ENCODE measurements at regions of chr3 and their contacts with region 1.

Region 1: GRCh38 chr3:127574880-127575878 is 15.4 kb downstream of the TPRA1 start:
- DNase-seq: peak; percentile 75 to 93 (median 85)
- ATAC-seq: peak; percentile 98
- H3K4me3 ChIP-seq: no peak overlapping the region
- H3K4me3 Mint-ChIP-seq: peak overlapping the region; percentile 30
- H3K27ac ChIP-seq: no peak overlapping the region
- H3K27ac Mint-ChIP-seq: peak overlapping the region; percentile 46
- H3K4me1 ChIP-seq: peaks cover 13% of the 10 kb centered on the region
- H3K4me1 Mint-ChIP-seq: peaks cover 19% of the 10 kb centered on the region
- H3K27me3 ChIP-seq: no peaks in the 10 kb centered on the region
- H3K27me3 Mint-ChIP-seq: no peaks in the 10 kb centered on the region
- CTCF ChIP-seq: peak; percentile 90

Region 2: DNA sequence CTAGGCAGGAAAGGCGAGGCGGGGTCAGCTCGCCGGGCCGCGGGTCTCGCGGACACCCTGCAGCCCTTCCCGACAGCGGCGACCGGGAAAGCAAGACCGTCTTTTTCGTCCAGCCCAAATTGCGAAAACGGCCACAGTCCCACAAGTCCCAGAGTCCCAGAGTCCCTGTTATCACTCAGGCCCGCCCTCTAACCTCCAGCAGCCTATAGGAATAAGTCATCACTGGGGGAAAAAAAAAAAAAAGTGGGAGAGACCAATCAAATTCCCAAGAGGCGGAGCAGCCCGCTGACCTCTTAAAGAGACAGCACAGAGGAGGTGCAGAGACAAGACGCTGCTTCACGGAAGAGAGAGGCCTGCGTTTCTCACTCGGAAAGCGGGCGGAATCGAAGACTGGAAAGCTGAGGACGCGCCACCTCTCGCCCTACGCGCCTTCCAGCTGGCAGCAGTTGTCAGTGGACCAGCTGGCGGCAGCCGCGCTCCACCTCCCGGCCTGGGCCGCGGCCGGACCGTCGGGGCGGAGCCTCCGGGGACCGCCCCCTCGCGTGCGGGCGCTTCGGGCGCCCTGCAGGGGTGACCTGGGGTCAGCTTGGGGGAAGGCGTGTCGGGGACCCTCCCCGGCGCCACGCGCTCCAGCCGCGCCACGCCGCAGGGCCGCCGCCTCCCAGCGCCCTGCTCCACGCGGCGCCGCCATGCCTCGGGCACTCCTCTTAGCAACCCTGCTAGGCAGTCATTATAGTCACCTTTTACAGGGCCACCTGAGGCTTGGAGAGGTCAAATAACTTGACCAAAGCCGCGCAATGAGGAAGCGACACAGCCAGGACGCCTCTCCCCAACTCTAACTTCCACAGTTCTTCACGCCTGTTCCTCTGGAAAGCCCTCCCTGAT is 15.7 kb after region 1 on chr3 and contains the start of gene TPRA1:
- CTCF ChIA-PET with region 1: interaction called, 21 read pairs
- POLR2A ChIA-PET with region 1: interaction called, 10 read pairs
- intact Hi-C with region 1: loop called in 1 of 2 experiments (anchors 1 kb)
- DNase-seq: peak; percentile 51 to 93 (median 74)
- ATAC-seq: peak; percentile 89
- H3K4me3 ChIP-seq: peak within 1 kb of the TSS; percentile 71
- H3K4me3 Mint-ChIP-seq: peak within 1 kb of the TSS; percentile 99
- H3K27ac ChIP-seq: peak within 1 kb of the TSS; percentile 54 to 82
- H3K27ac Mint-ChIP-seq: peak within 1 kb of the TSS; percentile 93
- H3K4me1 ChIP-seq: peaks cover 36% of the 10 kb centered on the region
- H3K4me1 Mint-ChIP-seq: peaks cover 43% of the 10 kb centered on the region
- H3K27me3 ChIP-seq: no peaks in the 10 kb centered on the region
- H3K27me3 Mint-ChIP-seq: no peaks in the 10 kb centered on the region
- CTCF ChIP-seq: no peak
- total RNA-seq, gene TPRA1: 7.5 to 7.8 TPM

Region 3: GRCh38 chr3:127628788-127629466 is 53.7 kb after region 1 on chr3 and contains the start of gene PODXL2:
- CTCF ChIA-PET with region 1: interaction called, 6 read pairs
- POLR2A ChIA-PET with region 1: no interaction called
- intact Hi-C with region 1: loop called in 1 of 2 experiments (anchors 5 kb)
- DNase-seq: peak in 9 of 14 experiments; percentile 12 to 77 (median 41)
- ATAC-seq: peak; percentile 40
- H3K4me3 ChIP-seq: peak within 1 kb of the TSS; percentile 65
- H3K4me3 Mint-ChIP-seq: peak within 1 kb of the TSS; percentile 90
- H3K27ac ChIP-seq: no peak within 1 kb of the TSS
- H3K27ac Mint-ChIP-seq: peak within 1 kb of the TSS; percentile 67
- H3K4me1 ChIP-seq: peaks cover 29% of the 10 kb centered on the region
- H3K4me1 Mint-ChIP-seq: peaks cover 44% of the 10 kb centered on the region
- H3K27me3 ChIP-seq: peaks cover 8 to 11% of the 10 kb centered on the region in 2 experiments
- H3K27me3 Mint-ChIP-seq: peaks cover 36% of the 10 kb centered on the region
- CTCF ChIP-seq: no peak
- total RNA-seq, gene PODXL2: 4.0 to 4.2 TPM

Region 4: GRCh38 chr3:127848131-127849129 is 273.3 kb after region 1 on chr3:
- CTCF ChIA-PET with region 1: no interaction called
- POLR2A ChIA-PET with region 1: no interaction called
- intact Hi-C with region 1: no loop called
- DNase-seq: no peak
- ATAC-seq: no peak
- H3K4me3 ChIP-seq: no peak overlapping the region
- H3K4me3 Mint-ChIP-seq: no peak overlapping the region
- H3K27ac ChIP-seq: no peak overlapping the region
- H3K27ac Mint-ChIP-seq: no peak overlapping the region
- H3K4me1 ChIP-seq: no peaks in the 10 kb centered on the region
- H3K4me1 Mint-ChIP-seq: no peaks in the 10 kb centered on the region
- H3K27me3 ChIP-seq: peaks cover 0 to 8% of the 10 kb centered on the region in 2 experiments
- H3K27me3 Mint-ChIP-seq: peaks cover 10% of the 10 kb centered on the region
- CTCF ChIP-seq: no peak

Region 5: GRCh38 chr3:127970966-127971592 is 395.9 kb after region 1 on chr3:
- CTCF ChIA-PET with region 1: no interaction called
- POLR2A ChIA-PET with region 1: no interaction called
- intact Hi-C with region 1: loop called in 1 of 2 experiments (anchors 1 kb)
- DNase-seq: peak in 5 of 14 experiments; percentile 1 to 53 (median 29)
- ATAC-seq: no peak
- H3K4me3 ChIP-seq: no peak overlapping the region
- H3K4me3 Mint-ChIP-seq: no peak overlapping the region
- H3K27ac ChIP-seq: no peak overlapping the region
- H3K27ac Mint-ChIP-seq: no peak overlapping the region
- H3K4me1 ChIP-seq: no peaks in the 10 kb centered on the region
- H3K4me1 Mint-ChIP-seq: no peaks in the 10 kb centered on the region
- H3K27me3 ChIP-seq: peaks cover 4 to 11% of the 10 kb centered on the region in 2 experiments
- H3K27me3 Mint-ChIP-seq: peaks cover 15% of the 10 kb centered on the region
- CTCF ChIP-seq: peak; percentile 56

Region 6: GRCh38 chr3:128607710-128608048 is 1032.5 kb after region 1 on chr3:
- CTCF ChIA-PET with region 1: no interaction called
- POLR2A ChIA-PET with region 1: no interaction called
- intact Hi-C with region 1: loop called in 1 of 2 experiments (anchors 5 kb)
- DNase-seq: no peak
- ATAC-seq: no peak
- H3K4me3 ChIP-seq: peak overlapping the region; percentile 62
- H3K4me3 Mint-ChIP-seq: no peak overlapping the region
- H3K27ac ChIP-seq: no peak overlapping the region
- H3K27ac Mint-ChIP-seq: no peak overlapping the region
- H3K4me1 ChIP-seq: peaks cover 12% of the 10 kb centered on the region
- H3K4me1 Mint-ChIP-seq: no peaks in the 10 kb centered on the region
- H3K27me3 ChIP-seq: peaks cover 5 to 10% of the 10 kb centered on the region in 2 experiments
- H3K27me3 Mint-ChIP-seq: no peaks in the 10 kb centered on the region
- CTCF ChIP-seq: no peak